Activated CD8-positive, alpha-beta T cell treated with anti-CD3 and anti-CD28 coated beads for 36 hours (primary cell): ENCODE measurements at regions of chr11 and their contacts with region 1.

Region 1: GRCh38 chr11:9137293-9138132 is 46.1 kb upstream of the SCUBE2 start:
- DNase-seq: peak; percentile 81
- ATAC-seq: peak; percentile 99
- H3K4me3 Mint-ChIP-seq: no peak overlapping the region
- H3K27ac Mint-ChIP-seq: no peak overlapping the region
- H3K4me1 Mint-ChIP-seq: peaks cover 8% of the 10 kb centered on the region
- H3K27me3 Mint-ChIP-seq: no peaks in the 10 kb centered on the region
- CTCF ChIP-seq: peak; percentile 91

Region 2: GRCh38 chr11:8768625-8769333 is 368.7 kb before region 1 on chr11:
- CTCF ChIA-PET with region 1: no interaction called
- POLR2A ChIA-PET with region 1: no interaction called
- intact Hi-C with region 1: no loop called
- DNase-seq: no peak
- ATAC-seq: no peak
- H3K4me3 Mint-ChIP-seq: no peak overlapping the region
- H3K27ac Mint-ChIP-seq: no peak overlapping the region
- H3K4me1 Mint-ChIP-seq: no peaks in the 10 kb centered on the region
- H3K27me3 Mint-ChIP-seq: no peaks in the 10 kb centered on the region
- CTCF ChIP-seq: no peak

Region 3: DNA sequence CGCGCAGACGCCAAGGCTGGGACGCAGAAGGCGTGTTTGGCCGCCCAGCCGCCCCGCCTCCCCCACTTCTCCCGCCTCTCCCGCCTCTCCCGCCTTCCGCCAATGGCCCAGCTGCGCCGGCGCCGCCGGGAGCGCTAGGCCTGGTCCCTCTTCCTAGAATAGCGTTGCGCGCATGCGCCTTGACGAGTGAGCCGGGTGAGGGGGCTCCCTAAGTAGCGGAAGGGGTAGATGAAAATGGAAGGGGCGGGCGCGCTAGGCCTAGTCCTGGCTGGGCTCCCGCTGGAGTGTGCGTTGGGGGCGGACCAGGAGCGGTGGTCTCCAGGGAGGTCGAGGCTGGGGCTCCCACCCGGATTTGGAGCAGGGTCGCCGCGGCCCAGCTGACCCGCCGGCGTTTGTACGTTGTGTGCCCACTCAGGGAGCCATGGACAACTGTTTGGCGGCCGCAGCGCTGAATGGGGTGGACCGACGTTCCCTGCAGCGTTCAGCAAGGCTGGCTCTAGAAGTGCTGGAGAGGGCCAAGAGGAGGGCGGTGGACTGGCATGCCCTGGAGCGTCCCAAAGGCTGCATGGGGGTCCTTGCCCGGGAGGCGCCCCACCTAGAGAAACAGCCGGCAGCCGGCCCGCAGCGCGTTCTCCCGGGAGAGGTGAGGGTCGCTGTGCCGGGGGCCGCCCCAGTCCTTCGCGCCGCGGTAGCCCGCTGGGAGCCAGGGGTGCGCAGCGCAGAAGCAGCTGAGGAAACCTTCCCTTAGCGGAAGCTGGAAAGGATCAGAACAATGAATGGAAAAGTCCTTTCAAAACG is 226.3 kb before region 1 on chr11 and contains the start of gene AKIP1:
- CTCF ChIA-PET with region 1: interaction called, 49 read pairs
- POLR2A ChIA-PET with region 1: no interaction called
- intact Hi-C with region 1: loop called (anchors 10 kb)
- DNase-seq: peak; percentile 90
- ATAC-seq: peak; percentile 80
- H3K4me3 Mint-ChIP-seq: peak within 1 kb of the TSS; percentile 84
- H3K27ac Mint-ChIP-seq: peak within 1 kb of the TSS; percentile 88
- H3K4me1 Mint-ChIP-seq: peaks cover 42% of the 10 kb centered on the region
- H3K27me3 Mint-ChIP-seq: no peaks in the 10 kb centered on the region
- CTCF ChIP-seq: no peak
- total RNA-seq, gene AKIP1: 27.8 to 28.2 TPM

Region 4: GRCh38 chr11:9015677-9016076 is 121.8 kb before region 1 on chr11:
- CTCF ChIA-PET with region 1: interaction called, 108 read pairs
- POLR2A ChIA-PET with region 1: no interaction called
- intact Hi-C with region 1: loop called (anchors 2 kb)
- DNase-seq: peak; percentile 72
- ATAC-seq: peak; percentile 97
- H3K4me3 Mint-ChIP-seq: no peak overlapping the region
- H3K27ac Mint-ChIP-seq: no peak overlapping the region
- H3K4me1 Mint-ChIP-seq: peaks cover 11% of the 10 kb centered on the region
- H3K27me3 Mint-ChIP-seq: no peaks in the 10 kb centered on the region
- CTCF ChIP-seq: peak; percentile 67

Region 5: GRCh38 chr11:9092853-9093778 is 44.4 kb before region 1 on chr11:
- CTCF ChIA-PET with region 1: interaction called, 13 read pairs
- POLR2A ChIA-PET with region 1: no interaction called
- intact Hi-C with region 1: no loop called
- DNase-seq: no peak
- ATAC-seq: no peak
- H3K4me3 Mint-ChIP-seq: no peak overlapping the region
- H3K27ac Mint-ChIP-seq: no peak overlapping the region
- H3K4me1 Mint-ChIP-seq: no peaks in the 10 kb centered on the region
- H3K27me3 Mint-ChIP-seq: peaks cover 49% of the 10 kb centered on the region
- CTCF ChIP-seq: no peak

Region 6: DNA sequence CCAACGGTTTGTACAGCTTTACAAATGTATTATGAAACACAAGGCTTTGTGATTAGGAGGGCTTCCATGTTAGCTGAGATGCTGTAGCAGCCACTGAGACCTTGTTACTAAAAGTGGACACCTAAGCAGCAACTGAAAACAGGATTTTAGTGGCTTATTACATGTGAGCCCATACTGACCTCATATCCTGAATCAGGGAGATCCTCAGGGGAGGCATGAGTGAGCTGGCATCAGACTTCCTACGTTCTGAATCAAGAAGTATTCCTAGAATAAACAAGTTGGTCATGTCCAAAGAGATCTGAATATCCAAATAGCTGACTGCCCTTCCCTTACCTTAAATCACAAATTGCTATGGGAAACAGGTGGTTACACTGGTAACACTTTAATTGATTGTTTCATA is 13.0 kb after region 1 on chr11:
- CTCF ChIA-PET with region 1: interaction called, 52 read pairs
- POLR2A ChIA-PET with region 1: interaction called, 3 read pairs
- intact Hi-C with region 1: no loop called
- DNase-seq: no peak
- ATAC-seq: no peak
- H3K4me3 Mint-ChIP-seq: no peak overlapping the region
- H3K27ac Mint-ChIP-seq: no peak overlapping the region
- H3K4me1 Mint-ChIP-seq: peaks cover 6% of the 10 kb centered on the region
- H3K27me3 Mint-ChIP-seq: no peaks in the 10 kb centered on the region
- CTCF ChIP-seq: no peak

Region 7: GRCh38 chr11:9182180-9182871 is 44.8 kb after region 1 on chr11:
- CTCF ChIA-PET with region 1: no interaction called
- POLR2A ChIA-PET with region 1: no interaction called
- intact Hi-C with region 1: no loop called
- DNase-seq: no peak
- ATAC-seq: no peak
- H3K4me3 Mint-ChIP-seq: no peak overlapping the region
- H3K27ac Mint-ChIP-seq: no peak overlapping the region
- H3K4me1 Mint-ChIP-seq: no peaks in the 10 kb centered on the region
- H3K27me3 Mint-ChIP-seq: no peaks in the 10 kb centered on the region
- CTCF ChIP-seq: no peak